Calu3 (cell line): ENCODE measurements at regions of chr7 and their contacts with region 1.

Region 1: GRCh38 chr7:27423272-27423671 is 180.7 kb downstream of the EVX1 start:
- DNase-seq: peak; percentile 77
- H3K4me3 Mint-ChIP-seq: peak overlapping the region; percentile 43
- H3K27ac Mint-ChIP-seq: peak overlapping the region; percentile 84
- H3K4me1 Mint-ChIP-seq: peaks cover 63% of the 10 kb centered on the region
- H3K27me3 Mint-ChIP-seq: no peaks in the 10 kb centered on the region
- CTCF ChIP-seq: no peak

Region 2: DNA sequence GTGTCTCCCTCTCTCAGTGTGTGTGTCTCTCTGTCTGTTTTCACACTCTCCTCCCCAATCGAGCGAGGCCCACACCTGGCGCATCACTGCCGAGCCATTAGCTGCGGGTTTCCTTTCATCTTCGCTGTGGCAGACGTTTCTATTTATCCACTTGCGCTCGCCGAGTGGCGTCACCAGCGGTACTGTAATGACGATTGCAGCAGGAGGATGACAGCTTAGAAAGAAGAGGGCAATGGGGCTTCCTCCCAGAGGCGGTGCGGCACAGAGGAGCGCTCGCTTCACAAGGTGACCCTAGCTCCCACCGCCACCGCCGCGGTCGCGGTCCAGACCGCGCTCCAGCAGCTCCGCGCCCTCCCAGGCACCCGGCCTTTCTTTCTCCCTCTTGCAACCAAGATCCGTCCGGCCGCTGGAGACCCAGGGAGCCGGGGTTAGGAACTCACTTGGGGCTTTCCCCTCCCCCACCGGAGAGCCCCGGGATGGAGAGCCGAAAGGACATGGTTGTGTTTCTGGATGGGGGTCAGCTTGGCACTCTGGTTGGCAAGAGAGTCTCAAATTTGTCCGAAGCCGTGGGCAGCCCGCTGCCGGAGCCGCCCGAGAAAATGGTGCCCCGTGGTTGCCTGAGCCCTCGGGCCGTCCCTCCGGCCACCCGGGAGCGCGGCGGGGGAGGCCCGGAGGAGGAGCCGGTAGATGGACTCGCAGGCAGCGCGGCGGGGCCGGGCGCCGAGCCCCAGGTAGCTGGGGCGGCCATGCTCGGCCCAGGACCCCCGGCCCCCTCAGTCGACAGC is 180.5 kb before region 1 on chr7 and contains the start of gene EVX1:
- CTCF ChIA-PET with region 1: no interaction called
- intact Hi-C with region 1: loop called (anchors 5 kb)
- DNase-seq: peak; percentile 33
- H3K4me3 Mint-ChIP-seq: peak within 1 kb of the TSS; percentile 64
- H3K27ac Mint-ChIP-seq: no peak within 1 kb of the TSS
- H3K4me1 Mint-ChIP-seq: no peaks in the 10 kb centered on the region
- H3K27me3 Mint-ChIP-seq: peaks cover 99% of the 10 kb centered on the region
- CTCF ChIP-seq: no peak
- total RNA-seq, gene EVX1: not detected in 2 replicates

Region 3: GRCh38 chr7:27346531-27347270 is 76.6 kb before region 1 on chr7:
- CTCF ChIA-PET with region 1: interaction called, 14 read pairs
- intact Hi-C with region 1: loop called (anchors 2 kb)
- DNase-seq: peak; percentile 91
- H3K4me3 Mint-ChIP-seq: peak overlapping the region; percentile 46
- H3K27ac Mint-ChIP-seq: peak overlapping the region; percentile 64
- H3K4me1 Mint-ChIP-seq: peaks cover 32% of the 10 kb centered on the region
- H3K27me3 Mint-ChIP-seq: no peaks in the 10 kb centered on the region
- CTCF ChIP-seq: no peak